ENCODE measurements at regions of chr10 and their contacts with region 1.

Region 1: GRCh38 chr10:104353325-104354048 is at the start of gene CFAP58:
- DNase-seq: peak; percentile 89 to 92 (median 90)
- H3K4me3 ChIP-seq: peak within 1 kb of the TSS; percentile 24 to 84 (median 66)
- H3K27ac ChIP-seq: no peak within 1 kb of the TSS
- H3K4me1 ChIP-seq: peaks cover 32 to 48% (median 42%) of the 10 kb centered on the region in 4 experiments
- H3K27me3 ChIP-seq: peaks cover 0 to 7% (median 0%) of the 10 kb centered on the region in 5 experiments

Region 2: DNA sequence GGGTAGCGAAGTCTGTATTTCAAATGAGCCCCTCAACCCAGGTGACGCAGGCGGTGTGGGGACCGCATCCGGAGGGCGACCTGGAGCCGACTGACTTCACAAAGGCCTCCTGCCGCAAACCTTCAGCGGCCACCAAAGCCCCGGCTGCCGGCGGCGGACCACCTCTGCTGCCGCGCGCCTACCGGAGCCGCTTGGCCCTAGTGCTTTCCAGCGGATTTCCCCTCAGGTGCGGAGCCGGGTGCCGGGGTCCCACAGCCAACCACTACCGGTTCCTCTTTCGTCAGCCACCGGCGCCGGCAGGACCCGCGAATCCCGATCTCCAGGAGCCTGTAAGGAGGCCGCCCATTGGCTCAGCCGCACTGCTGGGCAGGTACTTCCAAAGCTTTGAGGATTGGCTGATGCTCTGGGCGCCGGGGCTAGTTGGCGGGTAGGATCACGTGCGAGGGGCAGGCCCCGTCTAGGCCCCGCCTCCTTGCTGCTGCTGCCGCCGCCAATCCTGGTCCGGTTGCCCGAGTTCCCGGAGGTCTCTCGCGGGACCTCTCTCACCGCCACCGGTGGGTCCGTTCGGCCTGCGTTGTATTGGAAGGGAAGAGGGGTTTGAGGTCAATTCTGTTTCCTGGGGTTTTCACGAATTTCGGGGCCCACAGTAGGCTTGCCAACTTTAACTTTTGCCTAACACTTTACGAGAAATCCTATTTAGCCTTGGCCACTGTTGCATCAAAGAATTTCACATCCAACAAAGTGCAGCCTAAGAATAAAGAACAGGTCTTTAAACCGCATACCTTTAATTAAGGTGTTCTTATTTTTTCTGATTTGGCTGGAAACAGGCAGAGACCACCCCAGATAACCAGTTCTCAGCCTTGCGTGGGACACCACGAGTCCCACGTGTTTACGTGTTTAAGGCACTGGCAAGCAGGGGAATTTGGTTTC is 84.5 kb before region 1 on chr10 and contains the start of gene GSTO2:
- CTCF ChIA-PET with region 1: interaction called, 92 read pairs
- POLR2A ChIA-PET with region 1: interaction called, 3 read pairs
- DNase-seq: peak; percentile 99 to 100 (median 99)
- H3K4me3 ChIP-seq: peak within 1 kb of the TSS; percentile 74 to 95 (median 83)
- H3K27ac ChIP-seq: peak within 1 kb of the TSS; percentile 92 to 94
- H3K4me1 ChIP-seq: peaks cover 13 to 20% (median 16%) of the 10 kb centered on the region in 4 experiments
- H3K27me3 ChIP-seq: no peaks in the 10 kb centered on the region

Region 3: GRCh38 chr10:104300736-104301292 is 52.7 kb before region 1 on chr10:
- CTCF ChIA-PET with region 1: interaction called, 191 read pairs
- POLR2A ChIA-PET with region 1: interaction called, 4 read pairs
- DNase-seq: peak in 1 of 3 donors; percentile 28
- H3K4me3 ChIP-seq: no peak overlapping the region
- H3K27ac ChIP-seq: no peak overlapping the region
- H3K4me1 ChIP-seq: peaks cover 0 to 8% (median 7%) of the 10 kb centered on the region in 4 experiments
- H3K27me3 ChIP-seq: no peaks in the 10 kb centered on the region

Region 4: GRCh38 chr10:104317195-104317767 is 36.2 kb before region 1 on chr10:
- CTCF ChIA-PET with region 1: interaction called, 45 read pairs
- POLR2A ChIA-PET with region 1: no interaction called
- DNase-seq: no peak
- H3K4me3 ChIP-seq: no peak overlapping the region
- H3K27ac ChIP-seq: no peak overlapping the region
- H3K4me1 ChIP-seq: peaks cover 7 to 47% (median 37%) of the 10 kb centered on the region in 4 experiments
- H3K27me3 ChIP-seq: no peaks in the 10 kb centered on the region

Region 5: GRCh38 chr10:104337974-104338735 is 15.3 kb before region 1 on chr10 and contains the start of gene ITPRIP:
- CTCF ChIA-PET with region 1: interaction called, 68 read pairs
- POLR2A ChIA-PET with region 1: interaction called, 3 read pairs
- DNase-seq: peak; percentile 72 to 88 (median 81)
- H3K4me3 ChIP-seq: peak within 1 kb of the TSS; percentile 85 to 98 (median 91)
- H3K27ac ChIP-seq: peak within 1 kb of the TSS; percentile 86 to 96
- H3K4me1 ChIP-seq: peaks cover 21 to 47% (median 42%) of the 10 kb centered on the region in 4 experiments
- H3K27me3 ChIP-seq: no peaks in the 10 kb centered on the region